Activated B cell treated with CpG ODN at 0.5 μM for 24 hours (primary cell): ENCODE measurements at regions of chr7 and their contacts with region 1.

Region 1: GRCh38 chr7:152383341-152384234 is 52.2 kb downstream of the KMT2C start:
- DNase-seq: no peak
- ATAC-seq: no peak
- H3K4me3 Mint-ChIP-seq: no peak overlapping the region
- H3K27ac Mint-ChIP-seq: no peak overlapping the region
- H3K4me1 Mint-ChIP-seq: peaks cover 29% of the 10 kb centered on the region
- H3K27me3 Mint-ChIP-seq: no peaks in the 10 kb centered on the region
- CTCF ChIP-seq: no peak

Region 2: DNA sequence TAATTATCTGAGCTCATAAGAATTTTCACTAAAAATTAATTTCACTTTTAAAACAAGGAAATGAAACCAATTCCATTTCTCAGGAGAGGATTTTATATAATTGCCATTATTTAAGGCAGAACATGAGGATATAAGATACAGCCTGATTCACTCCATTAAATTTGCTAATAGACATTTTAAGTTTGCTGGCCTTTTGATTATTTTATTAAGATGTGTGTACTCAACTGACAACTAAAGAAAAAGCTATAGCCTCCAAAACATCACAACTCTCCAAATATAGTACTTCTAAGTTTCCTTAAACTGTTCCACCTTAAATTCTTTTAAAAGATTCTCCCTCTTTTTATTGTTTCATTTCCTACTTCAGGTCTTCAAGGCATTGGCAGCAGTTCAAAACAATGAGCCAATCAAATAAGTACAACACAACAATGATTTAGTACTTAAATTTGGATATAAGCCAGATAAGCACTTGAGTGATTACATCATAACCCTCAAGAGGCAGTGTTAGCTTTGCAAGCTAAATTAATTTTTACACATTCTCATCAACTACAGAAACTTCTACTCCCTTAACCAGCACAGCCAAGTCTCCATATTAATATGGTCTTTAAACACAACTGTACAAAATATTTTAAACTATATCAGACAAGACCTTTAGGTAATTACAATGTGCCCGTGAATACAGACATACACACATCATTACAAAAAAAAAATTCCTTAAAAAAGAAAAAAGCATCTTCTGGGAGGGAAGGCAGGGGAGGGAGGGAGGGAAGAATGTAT is 69.6 kb before region 1 on chr7:
- CTCF ChIA-PET with region 1: no interaction called
- POLR2A ChIA-PET with region 1: no interaction called
- intact Hi-C with region 1: no loop called
- DNase-seq: no peak
- ATAC-seq: no peak
- H3K4me3 Mint-ChIP-seq: no peak overlapping the region
- H3K27ac Mint-ChIP-seq: peak overlapping the region; percentile 8
- H3K4me1 Mint-ChIP-seq: peaks cover 27% of the 10 kb centered on the region
- H3K27me3 Mint-ChIP-seq: no peaks in the 10 kb centered on the region
- CTCF ChIP-seq: no peak

Region 3: DNA sequence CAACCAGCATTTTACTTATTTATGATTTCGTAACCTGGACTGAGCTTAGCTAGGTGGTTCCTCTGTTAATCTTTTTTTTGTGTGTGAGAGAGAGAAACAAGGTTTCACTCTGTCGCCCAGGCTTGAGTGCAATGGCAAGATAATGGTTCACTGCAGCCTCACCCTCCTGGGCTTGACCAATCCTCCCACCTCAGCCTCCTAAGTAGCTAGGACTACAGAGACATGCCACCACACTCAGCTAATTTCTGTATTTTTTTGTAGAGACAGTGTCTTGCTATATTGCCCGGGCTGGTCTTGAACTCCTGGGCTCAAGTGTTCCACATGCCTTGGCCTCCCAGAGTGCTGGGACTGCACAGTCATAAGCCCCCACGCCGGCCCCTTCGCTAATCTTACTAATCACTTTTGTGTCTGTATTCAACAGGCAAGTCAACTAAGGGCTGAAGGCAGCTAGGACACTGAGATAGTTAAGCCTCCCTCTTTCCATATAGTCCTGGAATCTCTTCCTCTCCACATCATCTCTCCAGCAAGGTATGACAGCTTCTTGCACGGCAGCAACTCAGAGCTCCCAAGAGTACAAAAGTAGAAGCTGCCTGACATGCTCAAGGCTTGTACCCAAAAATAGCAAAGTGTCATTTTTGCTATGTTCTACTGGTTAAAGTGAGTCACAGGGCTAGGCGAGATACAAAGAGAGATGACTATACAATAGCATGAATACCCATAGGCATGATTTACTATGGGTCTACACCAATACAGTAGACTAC is 40.9 kb after region 1 on chr7:
- CTCF ChIA-PET with region 1: no interaction called
- POLR2A ChIA-PET with region 1: no interaction called
- intact Hi-C with region 1: loop called (anchors 5 kb)
- DNase-seq: no peak
- ATAC-seq: peak; percentile 61
- H3K4me3 Mint-ChIP-seq: no peak overlapping the region
- H3K27ac Mint-ChIP-seq: no peak overlapping the region
- H3K4me1 Mint-ChIP-seq: peaks cover 68% of the 10 kb centered on the region
- H3K27me3 Mint-ChIP-seq: no peaks in the 10 kb centered on the region
- CTCF ChIP-seq: no peak